WTC11 (cell line): ENCODE measurements at regions of chr1 and their contacts with region 1.

Region 1: GRCh38 chr1:183685112-183685713 is 32.1 kb upstream of the APOBEC4 start:
- DNase-seq: no peak
- ATAC-seq: peak; percentile 80
- H3K4me3 Mint-ChIP-seq: no peak overlapping the region
- H3K27ac Mint-ChIP-seq: no peak overlapping the region
- H3K4me1 Mint-ChIP-seq: no peaks in the 10 kb centered on the region
- H3K27me3 Mint-ChIP-seq: no peaks in the 10 kb centered on the region
- CTCF ChIP-seq: peak; percentile 64

Region 2: DNA sequence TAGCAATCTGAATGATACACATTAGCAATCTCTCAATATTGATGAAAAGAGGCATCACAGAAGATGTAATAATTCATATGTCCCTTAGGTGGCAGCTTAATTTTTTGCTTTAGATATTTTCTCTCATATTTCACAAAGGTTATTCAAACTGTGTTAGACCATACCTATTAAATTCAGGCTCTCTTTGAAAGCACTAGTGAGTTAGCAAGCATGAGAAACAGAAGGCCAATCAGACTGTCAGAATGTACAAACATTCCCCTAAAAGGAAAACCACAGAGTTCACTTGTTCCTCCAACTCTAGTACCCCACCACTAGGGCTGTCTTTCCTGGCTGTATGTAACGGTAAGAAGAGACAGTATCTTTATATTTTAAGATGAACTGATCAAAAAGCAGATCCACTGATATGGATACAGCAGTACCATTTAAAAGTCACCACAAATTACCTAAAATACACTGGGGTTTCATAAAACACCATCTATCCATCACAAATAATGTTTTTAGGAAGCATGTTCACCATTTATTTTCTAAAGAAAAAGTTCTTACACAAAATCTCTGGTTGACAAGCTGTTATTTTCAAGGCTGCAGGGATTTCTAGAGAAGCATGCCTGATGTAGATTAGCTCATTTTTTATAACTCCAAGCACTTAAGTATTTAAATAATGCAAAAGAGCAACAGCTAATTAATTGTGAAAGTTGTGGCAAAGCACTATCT is 51.4 kb before region 1 on chr1:
- CTCF ChIA-PET with region 1: interaction called, 13 read pairs
- POLR2A ChIA-PET with region 1: no interaction called
- DNase-seq: no peak
- ATAC-seq: peak; percentile 8
- H3K4me3 Mint-ChIP-seq: peak overlapping the region; percentile 98
- H3K27ac Mint-ChIP-seq: 0 out of 2 replicates have a peak overlapping the region, but pooled peaks have one; percentile 61
- H3K4me1 Mint-ChIP-seq: peaks cover 36% of the 10 kb centered on the region
- H3K27me3 Mint-ChIP-seq: peaks cover 15% of the 10 kb centered on the region
- CTCF ChIP-seq: no peak

Region 3: GRCh38 chr1:183655562-183656075 is 29.6 kb before region 1 on chr1:
- CTCF ChIA-PET with region 1: interaction called, 80 read pairs
- POLR2A ChIA-PET with region 1: no interaction called
- DNase-seq: peak; percentile 85
- ATAC-seq: peak; percentile 92
- H3K4me3 Mint-ChIP-seq: no peak overlapping the region
- H3K27ac Mint-ChIP-seq: no peak overlapping the region
- H3K4me1 Mint-ChIP-seq: peaks cover 11% of the 10 kb centered on the region
- H3K27me3 Mint-ChIP-seq: peaks cover 2% of the 10 kb centered on the region; the same call in 1 of the 2 replicates
- CTCF ChIP-seq: peak; percentile 78

Region 4: GRCh38 chr1:183674339-183674738 is 10.9 kb before region 1 on chr1:
- CTCF ChIA-PET with region 1: interaction called, 13 read pairs
- POLR2A ChIA-PET with region 1: no interaction called
- DNase-seq: no peak
- ATAC-seq: no peak
- H3K4me3 Mint-ChIP-seq: no peak overlapping the region
- H3K27ac Mint-ChIP-seq: no peak overlapping the region
- H3K4me1 Mint-ChIP-seq: no peaks in the 10 kb centered on the region
- H3K27me3 Mint-ChIP-seq: no peaks in the 10 kb centered on the region
- CTCF ChIP-seq: no peak

Region 5: DNA sequence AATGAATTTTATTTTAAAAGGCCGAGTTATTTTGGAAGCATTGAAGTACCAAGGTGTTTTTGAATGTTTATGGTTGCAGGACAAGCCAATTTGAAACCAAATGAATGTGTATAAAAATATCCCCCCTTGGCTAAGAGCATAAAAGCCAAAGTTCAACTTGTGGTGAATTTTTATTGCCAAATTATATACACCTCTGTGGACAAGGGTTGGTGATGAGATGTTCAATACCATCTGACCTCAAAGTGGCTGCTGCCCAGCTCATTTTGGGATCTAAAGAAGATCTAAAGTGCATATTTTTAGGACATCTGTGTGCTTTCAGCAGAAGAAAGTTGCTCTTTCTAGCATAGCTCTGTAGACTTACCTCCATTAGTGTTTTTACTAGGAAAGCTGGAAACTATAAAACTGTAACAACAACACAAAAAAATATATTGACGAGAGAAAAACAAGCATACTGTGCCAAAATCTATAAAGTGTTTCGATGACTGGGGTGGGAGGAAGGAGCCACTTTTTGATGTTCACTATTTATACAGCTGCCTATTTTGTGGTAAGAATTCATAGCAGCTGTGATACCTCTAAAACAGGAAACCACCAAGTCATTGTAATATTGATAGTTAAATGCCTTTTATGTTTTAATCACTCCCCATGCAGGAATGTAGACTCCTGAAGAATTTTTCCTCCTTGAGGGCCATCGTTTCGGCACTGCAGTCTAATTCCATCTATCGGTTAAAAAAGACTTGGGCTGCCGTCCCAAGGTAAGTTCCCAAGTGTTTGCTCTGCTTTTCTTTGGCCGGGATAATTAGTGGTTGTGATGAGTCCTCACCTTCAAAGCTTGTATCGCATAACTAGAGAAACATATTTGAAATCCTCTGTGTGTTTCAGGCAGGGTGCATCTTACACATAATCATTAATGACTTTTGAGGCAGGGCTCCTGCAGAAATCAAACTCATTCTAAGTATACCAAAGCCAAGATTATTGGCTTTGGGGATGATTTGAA is 202.9 kb after region 1 on chr1:
- CTCF ChIA-PET with region 1: interaction called, 10 read pairs
- POLR2A ChIA-PET with region 1: no interaction called
- DNase-seq: no peak
- ATAC-seq: no peak
- H3K4me3 Mint-ChIP-seq: no peak overlapping the region
- H3K27ac Mint-ChIP-seq: no peak overlapping the region
- H3K4me1 Mint-ChIP-seq: peaks cover 18% of the 10 kb centered on the region
- H3K27me3 Mint-ChIP-seq: no peaks in the 10 kb centered on the region
- CTCF ChIP-seq: no peak

Region 6: GRCh38 chr1:183915625-183916510 is 230.7 kb after region 1 on chr1:
- CTCF ChIA-PET with region 1: interaction called, 48 read pairs
- POLR2A ChIA-PET with region 1: no interaction called
- DNase-seq: peak; percentile 65
- ATAC-seq: peak; percentile 94
- H3K4me3 Mint-ChIP-seq: no peak overlapping the region
- H3K27ac Mint-ChIP-seq: no peak overlapping the region
- H3K4me1 Mint-ChIP-seq: peaks cover 11% of the 10 kb centered on the region
- H3K27me3 Mint-ChIP-seq: no peaks in the 10 kb centered on the region
- CTCF ChIP-seq: peak; percentile 66; the same call in 1 of the 2 replicates